MCF 10A (cell line): ENCODE measurements at regions of chr6 and their contacts with region 1.

Region 1: DNA sequence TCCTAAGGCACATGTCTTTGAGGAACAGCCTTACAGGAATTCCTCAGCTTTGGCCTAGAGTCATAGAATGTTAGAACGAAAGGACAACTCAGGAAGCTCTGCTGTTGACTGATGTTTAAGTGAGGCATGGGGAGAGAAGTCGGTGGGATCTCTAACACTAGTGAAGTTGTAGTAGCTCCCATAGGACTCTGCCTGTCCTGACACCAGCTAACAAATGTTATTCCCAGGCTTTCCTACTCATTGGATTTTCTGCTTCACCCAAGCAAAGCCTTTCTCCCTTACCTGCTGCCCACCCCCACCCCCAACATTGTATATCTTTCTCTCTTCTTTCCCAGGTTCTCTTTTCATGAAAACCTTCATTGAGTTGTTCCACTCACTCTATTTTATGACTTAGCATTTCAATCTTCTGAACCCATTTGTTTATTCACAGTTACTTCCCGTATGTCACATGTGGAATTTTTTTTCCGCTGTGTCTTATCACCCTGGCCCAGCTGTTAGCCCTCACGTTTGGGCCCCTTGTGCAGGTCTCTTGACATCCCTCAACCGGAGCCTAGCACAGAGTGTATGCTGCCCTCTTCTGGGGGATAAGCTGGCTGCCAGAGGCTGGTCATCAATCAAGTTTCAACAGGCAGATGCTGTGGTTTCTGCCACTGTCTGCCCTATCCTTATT is 39.2 kb upstream of the RNF8 start:
- DNase-seq: peak; percentile 63
- H3K4me3 Mint-ChIP-seq: no peak overlapping the region
- H3K27ac Mint-ChIP-seq: no peak overlapping the region
- H3K4me1 Mint-ChIP-seq: no peaks in the 10 kb centered on the region
- H3K27me3 Mint-ChIP-seq: no peaks in the 10 kb centered on the region
- CTCF ChIP-seq: peak; percentile 39

Region 2: GRCh38 chr6:36917541-36918193 is 397.0 kb before region 1 on chr6:
- CTCF ChIA-PET with region 1: no interaction called
- POLR2A ChIA-PET with region 1: no interaction called
- intact Hi-C with region 1: no loop called
- DNase-seq: no peak
- H3K4me3 Mint-ChIP-seq: no peak overlapping the region
- H3K27ac Mint-ChIP-seq: no peak overlapping the region
- H3K4me1 Mint-ChIP-seq: peaks cover 16% of the 10 kb centered on the region
- H3K27me3 Mint-ChIP-seq: no peaks in the 10 kb centered on the region
- CTCF ChIP-seq: no peak

Region 3: DNA sequence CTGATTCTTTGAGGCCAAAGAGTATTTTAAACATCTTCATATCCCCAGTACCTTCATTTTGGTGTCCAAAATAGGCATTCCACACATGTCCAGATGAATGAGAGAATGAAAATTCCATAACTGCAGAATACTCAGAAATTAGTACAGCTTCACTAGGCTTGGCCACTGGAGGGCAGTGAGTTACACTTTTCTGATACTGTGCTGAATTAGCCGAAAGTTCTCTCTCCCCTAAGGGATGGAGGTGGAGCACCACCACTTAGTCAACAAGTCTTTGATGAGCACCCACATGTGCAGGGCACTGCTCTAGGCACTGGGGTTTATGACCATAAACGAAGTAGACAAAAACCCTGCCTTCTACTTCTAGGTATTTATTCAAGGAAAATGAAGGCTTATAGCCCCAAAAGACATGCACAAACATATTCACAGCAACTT is 10.7 kb before region 1 on chr6:
- CTCF ChIA-PET with region 1: interaction called, 13 read pairs
- POLR2A ChIA-PET with region 1: no interaction called
- intact Hi-C with region 1: no loop called
- DNase-seq: peak; percentile 52
- H3K4me3 Mint-ChIP-seq: no peak overlapping the region
- H3K27ac Mint-ChIP-seq: peak overlapping the region; percentile 57
- H3K4me1 Mint-ChIP-seq: no peaks in the 10 kb centered on the region
- H3K27me3 Mint-ChIP-seq: no peaks in the 10 kb centered on the region
- CTCF ChIP-seq: peak; percentile 30